ENCODE measurements at regions of chr9 and their contacts with region 1.

Region 1: GRCh38 chr9:109950710-109951443 is 170.9 kb downstream of the PALM2AKAP2 start:
- DNase-seq: no peak
- H3K4me3 Mint-ChIP-seq: peak overlapping the region; percentile 31
- H3K27ac Mint-ChIP-seq: peak overlapping the region; percentile 91
- H3K4me1 Mint-ChIP-seq: peaks cover 42% of the 10 kb centered on the region
- H3K27me3 Mint-ChIP-seq: peaks cover 2% of the 10 kb centered on the region

Region 2: GRCh38 chr9:109918339-109919163 is 32.3 kb before region 1 on chr9:
- intact Hi-C with region 1: loop called (anchors 1 kb)
- DNase-seq: peak; percentile 44
- H3K4me3 Mint-ChIP-seq: peak overlapping the region; percentile 75
- H3K27ac Mint-ChIP-seq: peak overlapping the region; percentile 97
- H3K4me1 Mint-ChIP-seq: peaks cover 64% of the 10 kb centered on the region
- H3K27me3 Mint-ChIP-seq: no peaks in the 10 kb centered on the region

Region 3: DNA sequence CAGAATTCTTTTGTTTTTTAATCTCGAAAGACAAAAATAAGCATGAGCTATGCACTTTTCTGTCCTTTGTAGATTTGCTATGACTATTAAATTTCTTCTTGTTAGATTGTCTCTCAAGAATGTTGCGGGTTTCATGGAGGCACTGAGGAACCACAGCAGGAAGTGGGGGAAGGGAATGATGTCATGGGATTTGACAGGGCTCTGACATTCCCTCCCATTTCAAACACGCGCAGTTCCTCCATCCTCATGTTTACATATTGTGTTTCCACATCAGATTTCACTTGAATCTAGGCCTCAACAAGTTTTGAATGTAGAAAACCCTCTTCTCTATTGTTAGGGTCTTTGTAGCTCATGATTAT is 16.0 kb before region 1 on chr9:
- intact Hi-C with region 1: loop called (anchors 1 kb)
- DNase-seq: no peak
- H3K4me3 Mint-ChIP-seq: peak overlapping the region; percentile 45
- H3K27ac Mint-ChIP-seq: peak overlapping the region; percentile 85
- H3K4me1 Mint-ChIP-seq: peaks cover 57% of the 10 kb centered on the region
- H3K27me3 Mint-ChIP-seq: no peaks in the 10 kb centered on the region

Region 4: DNA sequence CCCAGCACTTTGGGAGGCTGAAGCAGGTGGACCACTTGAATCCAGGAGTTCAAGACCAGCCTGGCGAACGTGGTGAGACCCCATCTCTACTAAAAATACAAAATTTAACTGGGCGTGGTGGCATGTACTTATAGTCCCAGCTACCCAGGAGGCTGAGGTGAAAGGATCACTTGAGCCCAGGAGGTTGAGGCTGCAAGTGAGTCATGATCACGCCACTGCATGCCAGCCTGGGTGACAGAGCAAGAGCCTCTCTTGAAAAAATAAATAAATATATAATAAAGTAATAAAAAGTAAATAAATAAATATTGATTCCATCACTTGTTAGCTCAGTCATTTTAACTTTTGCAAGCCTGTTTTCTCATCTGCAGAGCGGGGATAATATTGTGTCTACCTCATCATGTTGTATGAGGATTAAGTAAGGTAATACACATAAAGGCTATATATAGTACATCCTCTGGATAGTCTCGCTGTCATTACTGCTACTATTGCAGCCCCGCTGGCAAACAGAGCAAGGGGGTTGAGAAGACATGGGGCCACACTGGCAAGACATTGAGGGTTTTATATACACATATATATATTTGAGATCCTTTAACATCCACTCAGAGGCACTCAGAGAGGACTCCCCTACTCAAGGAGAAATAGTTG is 46.2 kb after region 1 on chr9:
- intact Hi-C with region 1: no loop called
- DNase-seq: no peak
- H3K4me3 Mint-ChIP-seq: no peak overlapping the region
- H3K27ac Mint-ChIP-seq: no peak overlapping the region
- H3K4me1 Mint-ChIP-seq: peaks cover 3% of the 10 kb centered on the region
- H3K27me3 Mint-ChIP-seq: peaks cover 2% of the 10 kb centered on the region

Region 5: GRCh38 chr9:110048403-110048975 is 97.6 kb after region 1 on chr9:
- intact Hi-C with region 1: loop called (anchors 1 kb)
- DNase-seq: peak; percentile 81
- H3K4me3 Mint-ChIP-seq: peak overlapping the region; percentile 93
- H3K27ac Mint-ChIP-seq: peak overlapping the region; percentile 89
- H3K4me1 Mint-ChIP-seq: peaks cover 58% of the 10 kb centered on the region
- H3K27me3 Mint-ChIP-seq: no peaks in the 10 kb centered on the region

Region 6: GRCh38 chr9:110714314-110714713 is 763.4 kb after region 1 on chr9:
- intact Hi-C with region 1: no loop called
- DNase-seq: no peak
- H3K4me3 Mint-ChIP-seq: no peak overlapping the region
- H3K27ac Mint-ChIP-seq: no peak overlapping the region
- H3K4me1 Mint-ChIP-seq: no peaks in the 10 kb centered on the region
- H3K27me3 Mint-ChIP-seq: no peaks in the 10 kb centered on the region